Activated T-helper 1 cell treated with anti-CD3 and anti-CD28 coated beads, Interleukin-12 subunit alpha, Interleukin-12 subunit beta, Interleukin-2, Interleukin-4 antibody, amounts not matched to agents 30 ng/mL and 10 ng/mL and 1 ng/mL, durations not matched to agents 14 hours and 24 hours and 36 hours (primary cell): ENCODE measurements at regions of chr4 and their contacts with region 1.

Region 1: DNA sequence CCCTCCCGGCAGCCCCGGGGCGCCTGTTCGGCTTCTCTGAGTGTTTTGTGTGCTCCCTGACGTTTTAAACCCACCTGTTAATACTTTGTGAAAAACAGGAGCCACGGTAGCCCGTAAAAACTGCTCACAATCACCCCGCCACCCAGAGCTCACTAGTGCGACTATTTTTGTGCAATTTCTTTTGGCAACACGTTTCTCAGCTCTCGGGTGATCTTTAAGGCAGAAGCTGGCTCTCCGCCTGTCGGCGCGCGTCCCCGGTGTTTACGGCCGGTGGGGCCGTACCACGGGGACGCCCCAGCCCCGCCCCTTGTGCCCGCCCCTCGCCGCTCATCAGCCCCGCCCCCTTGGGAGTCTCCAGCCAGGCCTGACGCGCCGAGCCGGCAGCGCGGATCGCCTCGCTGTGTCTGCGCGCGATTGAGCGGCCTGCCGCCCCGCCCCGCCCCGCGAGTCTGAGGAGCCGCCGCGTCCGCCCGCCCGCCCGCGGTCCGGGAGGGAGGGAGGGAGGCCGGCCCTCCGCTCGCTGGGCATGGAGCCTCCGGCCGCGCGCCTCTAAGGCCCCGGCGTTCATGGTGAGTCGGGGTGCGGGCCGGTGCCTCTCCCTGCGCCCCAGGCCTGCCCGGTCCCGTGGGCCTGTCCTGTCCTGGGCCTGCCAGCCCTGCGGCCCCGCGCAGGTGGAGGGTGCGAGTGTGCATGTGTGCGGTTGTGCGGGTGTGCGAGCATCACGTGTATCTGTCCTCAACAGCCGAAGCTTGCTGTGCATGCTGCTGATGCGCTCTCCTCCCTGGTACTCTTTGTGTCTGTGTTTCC is 56.2 kb upstream of the TADA2B start:
- DNase-seq: peak; percentile 94
- H3K4me3 Mint-ChIP-seq: peak overlapping the region; percentile 100
- H3K27ac Mint-ChIP-seq: peak overlapping the region; percentile 94
- H3K4me1 Mint-ChIP-seq: peaks cover 83% of the 10 kb centered on the region
- H3K27me3 Mint-ChIP-seq: no peaks in the 10 kb centered on the region

Region 2: DNA sequence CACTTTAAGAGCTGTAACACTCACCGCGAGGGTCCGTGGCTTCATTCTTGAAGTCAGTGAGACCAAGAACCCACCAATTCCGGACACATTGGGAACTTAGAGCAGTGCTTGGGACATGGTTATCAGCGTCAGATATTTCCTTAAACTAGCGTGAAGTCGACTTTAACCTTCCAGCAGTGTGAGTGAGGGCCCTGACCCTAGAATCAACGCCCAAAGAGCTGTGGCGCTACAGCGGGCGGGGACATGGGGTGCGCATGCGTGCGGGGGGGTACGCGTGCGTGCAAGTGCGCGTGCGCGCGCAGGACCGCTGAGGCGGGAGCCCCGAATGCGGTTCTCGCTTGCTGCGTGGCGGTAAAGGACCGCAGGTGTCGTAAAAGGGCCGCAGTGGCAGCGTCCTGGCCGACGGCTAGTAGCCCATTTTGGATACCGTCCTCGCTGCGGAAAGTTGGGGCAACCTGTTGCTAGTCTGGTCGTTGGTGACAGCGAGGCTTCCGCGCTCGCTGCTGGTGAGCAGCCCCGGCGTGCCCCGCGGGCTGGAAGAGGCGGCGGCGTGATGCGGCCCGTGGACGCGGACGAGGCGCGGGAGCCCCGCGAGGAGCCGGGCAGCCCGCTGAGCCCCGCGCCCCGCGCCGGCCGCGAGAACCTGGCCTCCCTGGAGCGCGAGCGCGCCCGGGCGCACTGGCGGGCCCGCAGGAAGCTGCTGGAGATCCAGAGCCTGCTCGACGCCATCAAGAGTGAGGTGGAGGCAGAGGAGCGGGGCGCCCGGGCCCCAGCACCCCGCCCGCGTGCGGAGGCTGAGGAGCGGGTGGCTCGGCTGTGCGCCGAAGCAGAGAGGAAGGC is 313.1 kb before region 1 on chr4:
- intact Hi-C with region 1: loop called (anchors 1 kb)
- DNase-seq: peak; percentile 93
- H3K4me3 Mint-ChIP-seq: peak overlapping the region; percentile 98
- H3K27ac Mint-ChIP-seq: peak overlapping the region; percentile 97
- H3K4me1 Mint-ChIP-seq: peaks cover 48% of the 10 kb centered on the region
- H3K27me3 Mint-ChIP-seq: no peaks in the 10 kb centered on the region

Region 3: GRCh38 chr4:6783053-6783981 is 203.7 kb before region 1 on chr4:
- intact Hi-C with region 1: loop called (anchors 1 kb)
- DNase-seq: peak; percentile 86
- H3K4me3 Mint-ChIP-seq: peak overlapping the region; percentile 85
- H3K27ac Mint-ChIP-seq: peak overlapping the region; percentile 86
- H3K4me1 Mint-ChIP-seq: peaks cover 57% of the 10 kb centered on the region
- H3K27me3 Mint-ChIP-seq: no peaks in the 10 kb centered on the region

Region 4: DNA sequence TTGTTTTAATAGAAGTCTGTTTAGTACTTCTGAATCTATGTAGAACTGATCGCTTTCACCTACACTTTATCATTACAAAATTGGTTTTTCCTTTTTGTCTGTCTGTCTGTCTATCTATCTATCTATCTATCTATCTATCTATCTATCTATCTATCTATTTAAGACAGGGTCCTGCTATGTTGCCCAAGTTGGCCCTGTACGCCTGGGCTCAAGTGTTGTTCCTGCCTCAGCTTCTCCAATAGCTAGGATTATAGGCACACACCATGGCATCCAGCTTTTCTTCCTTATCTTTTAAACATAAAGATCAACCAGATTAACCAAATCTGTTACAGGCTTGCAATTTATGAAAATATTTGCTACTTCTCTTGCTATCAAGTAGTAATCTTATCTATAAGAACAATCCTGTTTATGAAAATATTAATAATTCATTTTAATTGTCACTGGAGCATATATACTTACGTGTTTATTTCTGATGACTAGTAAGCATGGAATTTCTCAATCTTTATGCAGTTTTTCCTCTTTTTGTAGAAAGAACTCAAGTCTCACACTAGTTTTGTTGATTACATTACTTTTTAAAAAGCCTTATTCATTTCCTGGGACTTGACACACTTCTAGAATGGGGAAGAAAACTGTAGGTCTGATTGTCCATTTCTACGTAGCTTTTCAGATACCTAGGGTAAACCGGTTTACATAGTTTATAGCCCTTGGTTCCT is 179.9 kb before region 1 on chr4:
- intact Hi-C with region 1: no loop called
- DNase-seq: no peak
- H3K4me3 Mint-ChIP-seq: no peak overlapping the region
- H3K27ac Mint-ChIP-seq: no peak overlapping the region
- H3K4me1 Mint-ChIP-seq: peaks cover 5% of the 10 kb centered on the region
- H3K27me3 Mint-ChIP-seq: no peaks in the 10 kb centered on the region

Region 5: DNA sequence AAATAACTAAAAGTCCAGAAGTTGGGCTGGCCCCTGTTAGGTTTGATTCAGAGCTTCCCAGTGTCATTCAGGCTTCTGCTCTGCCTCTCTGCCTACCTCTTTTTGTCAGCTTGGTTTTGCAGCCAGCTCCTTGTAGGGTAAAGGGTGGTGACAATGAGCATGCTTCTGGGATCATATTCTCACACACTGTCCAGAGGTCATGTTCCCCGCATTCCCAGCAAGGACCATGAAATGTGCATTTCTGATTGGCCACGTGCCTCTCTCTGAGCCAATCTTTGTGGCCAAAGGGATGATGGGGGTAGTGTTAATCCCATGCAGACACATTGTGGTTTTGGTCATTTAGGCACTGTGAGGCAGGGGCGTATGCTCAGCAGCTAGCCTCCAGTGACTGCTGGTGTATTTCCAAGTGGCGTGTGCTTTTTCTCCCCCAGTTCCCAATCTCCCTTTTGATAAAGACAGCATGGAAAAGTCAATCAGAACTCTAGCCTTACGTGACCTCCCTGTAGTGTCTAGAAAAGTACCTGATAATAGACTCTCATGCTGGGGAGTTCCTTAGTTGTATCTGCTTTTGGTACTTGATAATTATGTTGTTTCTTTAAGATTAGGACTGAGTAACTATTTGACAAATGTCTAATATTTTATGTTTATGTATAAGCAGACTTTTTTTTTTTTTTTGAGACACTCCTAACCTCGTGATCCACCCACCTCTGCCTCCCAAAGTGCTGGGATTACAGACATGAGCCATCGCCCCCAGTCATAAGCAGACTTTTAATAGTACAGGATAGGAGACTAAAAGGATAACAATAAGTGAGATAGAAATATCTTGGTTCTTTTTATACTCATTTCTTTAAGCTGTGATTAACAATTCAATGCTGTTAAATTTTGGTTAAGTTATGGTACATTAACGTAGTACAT is 146.7 kb before region 1 on chr4:
- intact Hi-C with region 1: no loop called
- DNase-seq: no peak
- H3K4me3 Mint-ChIP-seq: no peak overlapping the region
- H3K27ac Mint-ChIP-seq: no peak overlapping the region
- H3K4me1 Mint-ChIP-seq: no peaks in the 10 kb centered on the region
- H3K27me3 Mint-ChIP-seq: no peaks in the 10 kb centered on the region

Region 6: DNA sequence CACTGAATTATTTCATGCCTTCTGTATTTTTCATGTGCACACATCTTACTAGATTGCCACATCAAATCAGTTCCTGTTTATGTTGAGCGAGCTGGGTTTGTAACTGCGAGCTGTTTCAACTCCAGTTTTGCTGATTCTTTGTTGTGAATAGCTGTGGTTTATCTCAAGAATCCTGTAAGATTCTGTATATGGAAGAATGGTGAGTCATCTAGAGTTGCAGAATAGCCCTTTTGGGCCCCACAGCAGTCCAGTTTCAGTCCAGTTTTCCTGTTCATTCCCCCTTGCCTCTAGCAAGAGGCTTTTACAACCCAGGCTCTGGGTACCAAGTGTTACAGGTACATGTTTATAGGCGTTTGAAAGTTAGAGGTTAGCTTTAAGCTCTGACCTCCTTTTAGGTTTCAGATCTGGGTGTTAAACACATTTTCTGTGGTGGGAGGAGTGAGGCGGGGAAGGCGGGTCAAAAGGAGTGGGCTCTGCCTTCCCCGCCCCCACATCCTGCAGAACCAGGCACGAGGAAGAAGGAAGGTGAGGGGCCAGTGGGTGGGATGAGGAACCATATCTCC is 44.7 kb before region 1 on chr4:
- intact Hi-C with region 1: loop called (anchors 1 kb)
- DNase-seq: peak; percentile 39
- H3K4me3 Mint-ChIP-seq: peak overlapping the region; percentile 61
- H3K27ac Mint-ChIP-seq: peak overlapping the region; percentile 85
- H3K4me1 Mint-ChIP-seq: peaks cover 53% of the 10 kb centered on the region
- H3K27me3 Mint-ChIP-seq: no peaks in the 10 kb centered on the region

Region 7: DNA sequence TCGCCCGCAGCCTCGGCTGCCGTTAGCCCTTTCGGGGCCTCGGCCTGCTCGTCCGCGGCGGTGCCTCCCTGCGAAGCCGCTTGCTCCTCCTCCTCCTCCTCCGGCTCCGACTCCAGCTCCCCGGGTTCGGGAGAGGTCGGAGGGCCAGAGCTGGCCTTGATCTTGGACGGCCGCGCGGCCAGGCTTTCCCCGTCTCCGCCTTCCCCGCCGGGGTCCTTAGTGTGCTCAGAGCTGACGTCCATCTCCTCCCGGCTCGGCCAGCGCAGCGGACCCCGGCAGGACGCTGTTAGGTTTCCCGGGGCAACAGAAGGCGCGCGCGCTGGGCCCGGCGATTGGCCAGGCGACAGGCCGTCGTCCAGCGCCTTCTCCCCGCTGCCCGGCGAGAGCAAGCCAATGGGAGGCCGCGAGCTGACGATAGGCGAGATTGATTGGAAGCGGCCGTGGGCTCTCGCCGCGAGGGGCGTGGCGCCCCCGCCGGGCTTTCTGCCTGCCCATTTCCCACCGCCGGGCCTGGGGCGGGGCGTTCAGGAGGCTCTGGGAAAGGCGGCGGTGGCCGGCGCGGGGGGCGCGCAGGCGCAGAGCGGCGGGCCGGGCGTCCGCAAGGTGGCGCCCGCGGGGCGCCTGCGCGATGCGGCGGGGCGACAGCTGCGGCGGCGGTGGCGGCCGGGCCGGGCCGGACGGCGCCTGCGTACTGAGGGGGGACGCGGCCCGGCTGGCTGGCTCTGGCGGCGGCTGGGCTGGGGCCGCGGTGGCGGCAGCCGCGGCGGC is 55.9 kb after region 1 on chr4 and contains the start of gene TADA2B:
- intact Hi-C with region 1: loop called (anchors 1 kb)
- DNase-seq: peak; percentile 93
- H3K4me3 Mint-ChIP-seq: peak within 1 kb of the TSS; percentile 95
- H3K27ac Mint-ChIP-seq: peak within 1 kb of the TSS; percentile 86
- H3K4me1 Mint-ChIP-seq: peaks cover 48% of the 10 kb centered on the region
- H3K27me3 Mint-ChIP-seq: peaks cover 8% of the 10 kb centered on the region
- total RNA-seq, gene TADA2B: 15.2 and 16.8 TPM in 2 replicates